ENCODE measurements at regions of chr1 and their contacts with region 1.

Region 1: GRCh38 chr1:153922972-153923925 is at the start of gene GATAD2B:
- DNase-seq: peak; percentile 95 to 100
- ATAC-seq: peak; percentile 86 to 98 (median 91)
- H3K4me3 ChIP-seq: peak within 1 kb of the TSS; percentile 86
- H3K4me3 Mint-ChIP-seq: peak within 1 kb of the TSS; percentile 95
- H3K27ac ChIP-seq: peak within 1 kb of the TSS; percentile 93
- H3K27ac Mint-ChIP-seq: peak within 1 kb of the TSS; percentile 96 to 97
- H3K4me1 ChIP-seq: peaks cover 34% of the 10 kb centered on the region
- H3K4me1 Mint-ChIP-seq: peaks cover 52 to 53% of the 10 kb centered on the region in 2 donors
- H3K27me3 ChIP-seq: no peaks in the 10 kb centered on the region
- H3K27me3 Mint-ChIP-seq: no peaks in the 10 kb centered on the region
- CTCF ChIP-seq: no peak
- total RNA-seq, gene GATAD2B: 68.1 to 91.3 (median 75.5) TPM

Region 2: GRCh38 chr1:153805042-153805745 is 118.1 kb before region 1 on chr1:
- intact Hi-C with region 1: loop called (anchors 5 kb)
- DNase-seq: peak; percentile 59 to 93
- ATAC-seq: peak; percentile 94 to 97 (median 96)
- H3K4me3 ChIP-seq: no peak overlapping the region
- H3K4me3 Mint-ChIP-seq: peak overlapping the region; percentile 54
- H3K27ac ChIP-seq: peak overlapping the region; percentile 93
- H3K27ac Mint-ChIP-seq: peak overlapping the region; percentile 89 to 97
- H3K4me1 ChIP-seq: peaks cover 39% of the 10 kb centered on the region
- H3K4me1 Mint-ChIP-seq: peaks cover 23 to 37% of the 10 kb centered on the region in 2 donors
- H3K27me3 ChIP-seq: no peaks in the 10 kb centered on the region
- H3K27me3 Mint-ChIP-seq: no peaks in the 10 kb centered on the region
- CTCF ChIP-seq: no peak

Region 3: GRCh38 chr1:153946622-153947241 is 23.5 kb after region 1 on chr1 and contains the start of gene DENND4B:
- intact Hi-C with region 1: loop called (anchors 1 kb)
- DNase-seq: peak; percentile 77 to 86
- ATAC-seq: peak; percentile 65 to 79 (median 70)
- H3K4me3 ChIP-seq: peak within 1 kb of the TSS; percentile 89
- H3K4me3 Mint-ChIP-seq: peak within 1 kb of the TSS; percentile 94
- H3K27ac ChIP-seq: peak within 1 kb of the TSS; percentile 98
- H3K27ac Mint-ChIP-seq: peak within 1 kb of the TSS; percentile 92 to 96
- H3K4me1 ChIP-seq: peaks cover 44% of the 10 kb centered on the region
- H3K4me1 Mint-ChIP-seq: peaks cover 39 to 51% of the 10 kb centered on the region in 2 donors
- H3K27me3 ChIP-seq: no peaks in the 10 kb centered on the region
- H3K27me3 Mint-ChIP-seq: no peaks in the 10 kb centered on the region
- CTCF ChIP-seq: peak; percentile 84
- total RNA-seq, gene DENND4B: 244 to 322 (median 291) TPM

Region 4: GRCh38 chr1:153958111-153958960 is 35.1 kb after region 1 on chr1 and contains the start of gene CRTC2:
- intact Hi-C with region 1: loop called (anchors 1 kb)
- DNase-seq: peak; percentile 95 to 98
- ATAC-seq: peak; percentile 86 to 98 (median 89)
- H3K4me3 ChIP-seq: peak within 1 kb of the TSS; percentile 94
- H3K4me3 Mint-ChIP-seq: peak within 1 kb of the TSS; percentile 96
- H3K27ac ChIP-seq: peak within 1 kb of the TSS; percentile 93
- H3K27ac Mint-ChIP-seq: peak within 1 kb of the TSS; percentile 82 to 92
- H3K4me1 ChIP-seq: peaks cover 53% of the 10 kb centered on the region
- H3K4me1 Mint-ChIP-seq: peaks cover 45 to 67% of the 10 kb centered on the region in 2 donors
- H3K27me3 ChIP-seq: no peaks in the 10 kb centered on the region
- H3K27me3 Mint-ChIP-seq: no peaks in the 10 kb centered on the region
- CTCF ChIP-seq: no peak
- total RNA-seq, gene CRTC2: 144 to 166 (median 154) TPM

Region 5: DNA sequence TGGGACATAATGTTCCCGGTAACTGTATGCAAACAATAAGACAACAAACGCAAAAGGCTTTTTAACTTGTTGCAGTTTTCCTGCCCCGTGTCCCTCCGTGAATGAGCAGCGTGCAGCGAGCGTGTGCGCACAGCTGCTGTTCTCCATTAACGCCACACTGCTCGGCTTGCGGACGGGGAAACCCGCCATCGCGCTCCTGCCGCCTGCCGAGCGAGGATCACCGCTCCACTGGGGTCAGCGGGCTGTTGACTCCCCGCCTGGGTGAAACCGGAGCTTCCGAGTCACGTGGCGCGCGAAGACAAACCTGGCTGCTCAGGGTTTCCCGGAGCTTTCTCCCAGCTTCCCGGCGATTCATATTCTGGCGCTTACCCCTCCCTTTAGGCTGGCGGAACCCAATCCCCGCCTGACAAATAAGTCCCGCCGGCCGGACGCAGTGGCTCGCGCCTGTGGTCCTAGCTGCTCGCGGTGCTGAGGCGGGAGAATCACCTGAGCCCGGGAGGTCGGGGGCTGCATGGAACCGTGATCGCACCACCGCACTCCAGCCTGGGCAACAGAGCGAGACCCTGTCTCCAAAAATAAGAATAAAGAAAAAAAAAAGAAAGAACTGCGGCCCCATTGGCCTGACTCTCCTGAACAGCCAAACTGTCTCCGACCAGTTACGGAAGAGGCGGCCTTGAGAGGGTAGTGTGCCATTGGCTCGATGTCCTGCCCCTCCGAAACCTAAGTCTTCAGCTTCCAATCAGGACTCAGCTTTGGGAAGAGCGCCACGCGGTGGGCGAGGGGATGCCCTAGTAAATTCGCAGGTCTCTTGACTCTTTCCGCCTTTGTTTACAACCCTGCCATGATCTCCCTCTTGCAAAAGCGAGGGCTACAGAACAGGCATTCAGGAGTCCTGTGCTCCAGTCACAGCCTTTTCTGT is 44.1 kb after region 1 on chr1 and contains the start of gene CREB3L4:
- intact Hi-C with region 1: loop called (anchors 2 kb)
- DNase-seq: peak; percentile 77 to 95
- ATAC-seq: peak; percentile 82 to 95 (median 87)
- H3K4me3 ChIP-seq: peak within 1 kb of the TSS; percentile 93
- H3K4me3 Mint-ChIP-seq: peak within 1 kb of the TSS; percentile 99
- H3K27ac ChIP-seq: peak within 1 kb of the TSS; percentile 96
- H3K27ac Mint-ChIP-seq: peak within 1 kb of the TSS; percentile 95 to 98
- H3K4me1 ChIP-seq: peaks cover 47% of the 10 kb centered on the region
- H3K4me1 Mint-ChIP-seq: peaks cover 53 to 58% of the 10 kb centered on the region in 2 donors
- H3K27me3 ChIP-seq: no peaks in the 10 kb centered on the region
- H3K27me3 Mint-ChIP-seq: no peaks in the 10 kb centered on the region
- CTCF ChIP-seq: peak; percentile 36
- total RNA-seq, gene CREB3L4: 10.8 to 16.8 (median 10.9) TPM

Region 6: DNA sequence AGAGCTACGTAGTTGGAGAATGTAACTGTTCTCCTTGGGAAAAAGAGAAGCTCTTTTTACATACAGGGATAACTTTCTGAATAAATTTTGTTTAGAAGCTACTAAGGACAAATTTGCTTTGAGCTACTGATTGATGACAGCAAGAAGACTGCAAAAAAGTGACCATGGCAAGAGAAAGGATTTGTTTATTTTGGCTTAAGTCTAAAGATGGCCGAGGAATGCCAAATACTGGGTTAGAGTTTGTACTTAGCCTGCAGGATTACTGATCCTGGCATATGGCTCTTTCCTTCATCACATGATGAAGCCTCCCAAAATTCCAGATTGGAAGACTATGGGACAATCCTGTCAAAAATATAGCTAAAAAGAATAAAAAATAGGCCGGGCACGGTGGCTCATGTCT is 96.0 kb after region 1 on chr1:
- intact Hi-C with region 1: no loop called
- DNase-seq: no peak
- ATAC-seq: no peak
- H3K4me3 ChIP-seq: no peak overlapping the region
- H3K4me3 Mint-ChIP-seq: no peak overlapping the region
- H3K27ac ChIP-seq: no peak overlapping the region
- H3K27ac Mint-ChIP-seq: no peak overlapping the region
- H3K4me1 ChIP-seq: no peaks in the 10 kb centered on the region
- H3K4me1 Mint-ChIP-seq: no peaks in the 10 kb centered on the region
- H3K27me3 ChIP-seq: no peaks in the 10 kb centered on the region
- H3K27me3 Mint-ChIP-seq: no peaks in the 10 kb centered on the region
- CTCF ChIP-seq: no peak